RWPE1 (cell line): ENCODE measurements at regions of chr4 and their contacts with region 1.

Region 1: DNA sequence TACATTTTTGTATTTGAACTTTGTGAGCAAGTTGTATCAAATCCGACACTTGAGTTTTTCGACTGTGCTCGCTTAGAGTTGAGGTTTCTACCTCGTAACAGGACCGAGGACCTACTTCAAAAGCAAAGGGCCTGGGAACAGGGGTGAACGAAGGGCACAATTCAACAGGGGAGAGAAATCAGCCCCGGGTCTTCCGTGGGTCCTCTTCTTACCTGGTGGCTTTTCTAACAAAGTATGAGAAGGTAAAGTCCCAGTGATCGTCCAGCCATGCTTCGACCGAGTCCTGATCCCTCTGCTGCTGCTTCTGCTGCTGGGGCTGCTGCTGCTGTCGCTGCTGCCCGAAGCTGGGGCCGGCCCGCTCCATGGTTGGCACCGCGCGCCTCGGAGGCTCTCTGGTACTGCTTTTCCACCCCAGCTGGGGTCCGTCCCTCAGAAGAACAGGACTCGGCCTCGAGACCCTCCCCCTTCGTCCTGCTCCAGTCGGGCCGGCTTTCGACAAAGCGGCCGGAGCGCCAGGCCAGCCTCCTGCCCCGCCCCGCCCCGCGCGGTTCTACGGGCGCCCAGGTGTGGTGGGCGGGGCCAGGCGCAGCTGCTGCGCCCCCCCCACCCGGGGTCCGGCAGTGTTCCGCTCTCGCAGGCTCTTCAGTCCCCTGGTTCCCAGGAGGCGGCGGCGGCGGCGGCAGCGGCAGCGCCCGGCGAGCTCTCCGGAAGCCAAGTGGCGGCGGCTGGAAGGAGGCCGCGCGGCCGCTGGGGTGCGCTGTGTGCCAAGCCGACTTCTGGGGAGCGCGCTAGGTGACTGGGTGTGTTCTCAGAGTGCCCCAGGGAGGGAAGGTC is at the start of gene PDE5A:
- DNase-seq: peak; percentile 78
- H3K27ac ChIP-seq: no peak within 1 kb of the TSS; the same call in 1 of the 2 replicates
- CTCF ChIP-seq: peak; percentile 86

Region 2: GRCh38 chr4:119643306-119644042 is 14.9 kb after region 1 on chr4:
- CTCF ChIA-PET with region 1: interaction called, 10 read pairs
- POLR2A ChIA-PET with region 1: no interaction called
- DNase-seq: no peak
- H3K27ac ChIP-seq: no peak overlapping the region
- CTCF ChIP-seq: no peak

Region 3: GRCh38 chr4:119785963-119786362 is 157.4 kb after region 1 on chr4:
- CTCF ChIA-PET with region 1: interaction called, 12 read pairs
- POLR2A ChIA-PET with region 1: no interaction called
- DNase-seq: peak; percentile 9
- H3K27ac ChIP-seq: no peak overlapping the region
- CTCF ChIP-seq: peak; percentile 17; the same call in 1 of the 2 replicates